ENCODE measurements at regions of chr18 and their contacts with region 1.

Region 1: DNA sequence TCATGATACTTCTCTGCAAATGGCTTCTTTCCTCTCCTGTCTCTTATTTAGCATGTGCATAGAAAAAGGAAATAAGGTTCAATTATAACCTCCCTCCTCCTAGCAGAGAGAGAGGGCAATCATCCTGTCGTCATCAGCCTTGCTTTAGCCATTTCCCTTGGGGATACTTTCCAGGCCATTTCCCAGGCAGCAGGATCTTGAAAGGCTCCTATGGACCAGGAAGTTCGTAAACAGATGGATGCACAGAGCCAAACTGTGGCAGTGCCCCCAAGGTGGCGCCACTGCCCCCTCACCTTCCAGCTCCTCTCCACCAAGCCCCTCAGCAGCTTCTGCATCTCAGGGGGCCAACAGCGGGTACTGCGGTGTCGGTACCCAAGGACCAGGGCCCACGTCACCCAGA is 157.4 kb downstream of the DTNA start:
- DNase-seq: peak; percentile 34
- ATAC-seq: no peak
- H3K4me3 Mint-ChIP-seq: no peak overlapping the region
- H3K27ac Mint-ChIP-seq: peak overlapping the region; percentile 67
- H3K4me1 Mint-ChIP-seq: peaks cover 47% of the 10 kb centered on the region
- H3K27me3 Mint-ChIP-seq: peaks cover 3% of the 10 kb centered on the region

Region 2: GRCh38 chr18:34801774-34802173 is 65.7 kb before region 1 on chr18:
- CTCF ChIA-PET with region 1: interaction called, 3 read pairs
- POLR2A ChIA-PET with region 1: no interaction called
- intact Hi-C with region 1: loop called in 1 of 2 experiments (anchors 5 kb)
- DNase-seq: peak; percentile 53
- ATAC-seq: peak; percentile 89
- H3K4me3 Mint-ChIP-seq: no peak overlapping the region
- H3K27ac Mint-ChIP-seq: no peak overlapping the region
- H3K4me1 Mint-ChIP-seq: peaks cover 14% of the 10 kb centered on the region
- H3K27me3 Mint-ChIP-seq: peaks cover 31% of the 10 kb centered on the region

Region 3: GRCh38 chr18:34921226-34921625 is 53.7 kb after region 1 on chr18:
- CTCF ChIA-PET with region 1: no interaction called
- POLR2A ChIA-PET with region 1: no interaction called
- intact Hi-C with region 1: no loop called
- DNase-seq: no peak
- ATAC-seq: no peak
- H3K4me3 Mint-ChIP-seq: no peak overlapping the region
- H3K27ac Mint-ChIP-seq: no peak overlapping the region
- H3K4me1 Mint-ChIP-seq: no peaks in the 10 kb centered on the region
- H3K27me3 Mint-ChIP-seq: peaks cover 5% of the 10 kb centered on the region

Region 4: DNA sequence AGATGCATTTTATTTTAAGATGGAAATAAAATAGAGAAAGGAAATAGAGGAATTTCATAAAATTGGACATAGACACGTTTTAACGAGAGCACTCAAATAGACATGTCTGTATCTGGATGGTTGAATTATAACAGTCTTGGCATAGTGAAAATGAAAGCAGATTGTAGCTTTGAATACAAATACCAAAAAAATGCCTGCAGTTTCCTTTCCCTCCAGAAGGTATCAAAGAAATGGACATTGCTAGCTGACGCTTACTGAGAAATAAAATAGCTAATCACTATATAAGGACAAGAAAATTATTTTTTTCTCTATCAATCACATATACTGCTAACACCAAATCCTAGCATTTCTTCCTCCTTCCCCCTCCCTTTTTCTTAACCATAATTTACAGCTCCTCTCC is 162.2 kb after region 1 on chr18:
- CTCF ChIA-PET with region 1: no interaction called
- POLR2A ChIA-PET with region 1: no interaction called
- intact Hi-C with region 1: loop called in 1 of 2 experiments (anchors 5 kb)
- DNase-seq: no peak
- ATAC-seq: peak; percentile 67
- H3K4me3 Mint-ChIP-seq: peak overlapping the region; percentile 69
- H3K27ac Mint-ChIP-seq: peak overlapping the region; percentile 96
- H3K4me1 Mint-ChIP-seq: peaks cover 61% of the 10 kb centered on the region
- H3K27me3 Mint-ChIP-seq: no peaks in the 10 kb centered on the region

Region 5: DNA sequence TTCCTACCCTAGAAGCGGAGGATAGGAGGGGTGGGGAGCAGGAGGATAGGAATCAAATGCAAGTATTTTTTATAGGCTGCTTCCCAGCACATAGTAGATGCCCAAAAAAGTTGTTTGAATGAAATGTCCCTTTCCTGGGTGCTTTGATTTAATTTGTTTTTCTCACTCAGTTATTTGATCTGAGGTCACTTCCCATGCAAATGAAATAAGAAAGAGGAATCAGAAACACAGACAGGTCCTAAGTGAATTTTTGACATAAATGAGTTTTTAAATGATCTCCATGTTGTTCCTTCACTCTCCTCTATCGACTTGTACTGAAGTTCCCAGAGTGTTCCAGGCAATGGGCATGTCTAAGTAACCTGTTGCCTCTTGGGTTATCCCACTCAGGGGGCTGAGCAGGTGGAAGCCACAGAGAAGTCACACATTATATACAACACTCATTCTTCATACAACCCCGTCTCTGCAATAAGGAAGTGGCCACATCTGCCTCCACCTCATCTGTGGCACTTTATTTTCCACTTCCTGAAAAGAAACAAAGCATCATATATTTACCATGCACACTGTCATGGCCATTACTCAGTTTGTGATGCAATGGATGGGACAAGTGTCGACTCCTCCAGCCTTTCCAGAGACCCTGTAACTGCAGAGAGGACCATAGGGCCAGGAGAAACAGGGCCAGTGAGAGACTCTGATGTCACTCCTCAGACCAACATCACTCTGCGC is 291.4 kb after region 1 on chr18:
- CTCF ChIA-PET with region 1: interaction called, 3 read pairs
- POLR2A ChIA-PET with region 1: no interaction called
- intact Hi-C with region 1: loop called (anchors 5 kb)
- DNase-seq: peak; percentile 51
- ATAC-seq: peak; percentile 78
- H3K4me3 Mint-ChIP-seq: no peak overlapping the region
- H3K27ac Mint-ChIP-seq: peak overlapping the region; percentile 94
- H3K4me1 Mint-ChIP-seq: peaks cover 28% of the 10 kb centered on the region
- H3K27me3 Mint-ChIP-seq: no peaks in the 10 kb centered on the region

Region 6: GRCh38 chr18:35616664-35617423 is 749.3 kb after region 1 on chr18:
- CTCF ChIA-PET with region 1: no interaction called
- POLR2A ChIA-PET with region 1: no interaction called
- intact Hi-C with region 1: loop called in 1 of 2 experiments (anchors 10 kb)
- DNase-seq: peak; percentile 81
- ATAC-seq: peak; percentile 94
- H3K4me3 Mint-ChIP-seq: no peak overlapping the region
- H3K27ac Mint-ChIP-seq: no peak overlapping the region
- H3K4me1 Mint-ChIP-seq: peaks cover 16% of the 10 kb centered on the region
- H3K27me3 Mint-ChIP-seq: no peaks in the 10 kb centered on the region

Measured in activated CD4-positive, alpha-beta T cell treated with anti-CD3 and anti-CD28 coated beads for 36 hours (primary cell).